ENCODE measurements at regions of chr6 and their contacts with region 1.

Region 1: DNA sequence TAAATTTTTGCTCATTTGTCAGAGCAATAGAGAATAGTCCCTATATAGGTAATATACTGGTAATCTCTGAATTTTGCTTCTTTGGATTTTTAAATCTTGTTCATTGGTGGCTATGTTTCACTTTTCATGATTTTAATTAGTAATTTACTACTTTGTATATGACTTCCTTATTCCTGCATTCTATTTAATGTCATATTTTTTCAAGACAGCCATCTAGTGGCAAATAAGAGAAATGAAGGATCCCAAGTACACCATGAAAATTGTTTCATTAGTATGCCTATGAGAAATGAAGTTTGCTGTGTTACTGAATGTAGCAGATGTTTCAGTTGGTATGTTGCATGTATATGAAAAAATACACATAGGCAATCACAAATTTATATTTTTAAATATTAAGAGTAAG is 82.4 kb downstream of the ZNF292 start:
- DNase-seq: no peak
- H3K4me3 ChIP-seq: no peak overlapping the region
- H3K27ac ChIP-seq: no peak overlapping the region
- H3K4me1 ChIP-seq: no peaks in the 10 kb centered on the region
- H3K27me3 ChIP-seq: no peaks in the 10 kb centered on the region
- CTCF ChIP-seq: peak; percentile 60 to 70 (median 61)
- EP300 ChIP-seq: no peak
- POLR2A ChIP-seq: no peak

Region 2: GRCh38 chr6:87115402-87116135 is 122.2 kb before region 1 on chr6:
- intact Hi-C with region 1: no loop called
- DNase-seq: no peak
- H3K4me3 ChIP-seq: no peak overlapping the region
- H3K27ac ChIP-seq: no peak overlapping the region
- H3K4me1 ChIP-seq: no peaks in the 10 kb centered on the region
- H3K27me3 ChIP-seq: no peaks in the 10 kb centered on the region
- CTCF ChIP-seq: no peak
- EP300 ChIP-seq: no peak
- POLR2A ChIP-seq: no peak

Region 3: DNA sequence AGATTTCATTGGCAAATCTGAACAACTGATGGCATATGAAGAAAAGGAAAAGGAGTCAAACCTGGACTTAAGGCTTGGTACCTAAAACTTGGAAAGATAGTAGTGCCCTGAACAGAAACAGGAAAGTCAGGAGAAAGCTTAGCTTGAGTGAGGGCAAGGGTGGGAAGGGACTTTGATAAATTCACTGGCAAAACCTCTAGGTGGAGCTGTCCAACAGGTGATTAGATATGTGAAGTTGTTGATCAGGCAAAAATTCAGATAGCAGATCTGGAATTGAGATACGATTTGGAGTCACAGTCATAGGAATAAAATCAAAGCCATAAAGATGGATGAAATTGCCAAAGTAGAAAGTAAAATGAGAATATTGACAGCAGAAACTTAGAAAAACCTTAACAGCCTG is 98.6 kb before region 1 on chr6:
- intact Hi-C with region 1: loop called (anchors 2 kb)
- DNase-seq: no peak
- H3K4me3 ChIP-seq: no peak overlapping the region
- H3K27ac ChIP-seq: no peak overlapping the region
- H3K4me1 ChIP-seq: no peaks in the 10 kb centered on the region
- H3K27me3 ChIP-seq: peaks cover 0 to 7% (median 0%) of the 10 kb centered on the region in 4 donors
- CTCF ChIP-seq: peak; percentile 56 to 77 (median 62)
- EP300 ChIP-seq: no peak
- POLR2A ChIP-seq: no peak

Region 4: DNA sequence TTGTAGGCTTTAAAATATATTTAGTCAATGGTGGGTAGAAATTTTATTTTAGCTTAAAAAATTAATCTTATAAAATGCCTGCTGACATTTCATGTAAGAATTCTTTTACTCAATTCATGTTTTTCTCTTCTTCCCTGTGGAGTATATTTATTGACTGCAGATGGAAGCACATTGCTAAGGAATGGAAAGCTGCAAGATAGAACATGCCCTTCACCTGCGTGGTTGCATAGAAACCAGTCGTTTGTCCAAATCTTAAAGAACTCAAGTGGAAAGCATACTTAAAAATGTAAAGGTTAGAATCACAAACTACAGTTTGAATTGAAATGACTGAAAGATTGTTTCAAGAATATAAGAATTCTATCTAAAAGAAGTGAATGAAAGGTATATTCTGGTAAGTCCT is 137.5 kb after region 1 on chr6:
- intact Hi-C with region 1: no loop called
- DNase-seq: no peak
- H3K4me3 ChIP-seq: no peak overlapping the region
- H3K27ac ChIP-seq: no peak overlapping the region
- H3K4me1 ChIP-seq: no peaks in the 10 kb centered on the region
- H3K27me3 ChIP-seq: no peaks in the 10 kb centered on the region
- CTCF ChIP-seq: no peak
- EP300 ChIP-seq: no peak
- POLR2A ChIP-seq: no peak